Esophagus squamous epithelium (tissue), 5 donors: ENCODE measurements at regions of chr11 and their contacts with region 1.

Region 1: GRCh38 chr11:26276798-26277424 is 55.0 kb upstream of the ANO3 start:
- DNase-seq: no peak
- H3K4me3 ChIP-seq: no peak overlapping the region
- H3K27ac ChIP-seq: no peak overlapping the region
- H3K4me1 ChIP-seq: no peaks in the 10 kb centered on the region
- H3K27me3 ChIP-seq: peaks cover 0 to 20% (median 0%) of the 10 kb centered on the region in 4 donors
- CTCF ChIP-seq: peak; percentile 51 to 91 (median 87)
- POLR2A ChIP-seq: no peak

Region 2: DNA sequence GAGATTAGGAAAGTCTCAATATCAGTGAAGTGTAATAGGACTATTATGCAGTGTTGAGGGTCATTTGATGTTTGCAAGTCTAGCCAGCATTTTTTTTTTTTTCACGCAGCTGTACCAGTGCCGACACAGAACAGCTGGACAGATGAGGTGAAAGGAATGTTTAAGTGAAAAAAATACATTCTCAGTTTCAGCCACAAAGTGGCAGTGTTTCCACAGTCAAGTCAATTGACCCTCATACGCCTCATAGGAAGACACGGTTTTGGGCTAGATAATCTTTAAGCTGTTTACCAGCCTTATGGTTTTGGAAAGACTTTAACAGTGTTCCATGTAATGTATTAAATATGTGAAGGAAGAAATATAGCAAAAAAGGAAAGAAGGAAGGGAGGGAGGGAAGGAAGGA is 294.9 kb before region 1 on chr11:
- intact Hi-C with region 1: loop called (anchors 5 kb)
- DNase-seq: no peak
- H3K4me3 ChIP-seq: no peak overlapping the region
- H3K27ac ChIP-seq: no peak overlapping the region
- H3K4me1 ChIP-seq: no peaks in the 10 kb centered on the region
- H3K27me3 ChIP-seq: no peaks in the 10 kb centered on the region
- CTCF ChIP-seq: peak in 5 of 6 experiments; percentile 22 to 56 (median 35)
- POLR2A ChIP-seq: no peak